ENCODE measurements at regions of chr13 and their contacts with region 1.

Region 1: DNA sequence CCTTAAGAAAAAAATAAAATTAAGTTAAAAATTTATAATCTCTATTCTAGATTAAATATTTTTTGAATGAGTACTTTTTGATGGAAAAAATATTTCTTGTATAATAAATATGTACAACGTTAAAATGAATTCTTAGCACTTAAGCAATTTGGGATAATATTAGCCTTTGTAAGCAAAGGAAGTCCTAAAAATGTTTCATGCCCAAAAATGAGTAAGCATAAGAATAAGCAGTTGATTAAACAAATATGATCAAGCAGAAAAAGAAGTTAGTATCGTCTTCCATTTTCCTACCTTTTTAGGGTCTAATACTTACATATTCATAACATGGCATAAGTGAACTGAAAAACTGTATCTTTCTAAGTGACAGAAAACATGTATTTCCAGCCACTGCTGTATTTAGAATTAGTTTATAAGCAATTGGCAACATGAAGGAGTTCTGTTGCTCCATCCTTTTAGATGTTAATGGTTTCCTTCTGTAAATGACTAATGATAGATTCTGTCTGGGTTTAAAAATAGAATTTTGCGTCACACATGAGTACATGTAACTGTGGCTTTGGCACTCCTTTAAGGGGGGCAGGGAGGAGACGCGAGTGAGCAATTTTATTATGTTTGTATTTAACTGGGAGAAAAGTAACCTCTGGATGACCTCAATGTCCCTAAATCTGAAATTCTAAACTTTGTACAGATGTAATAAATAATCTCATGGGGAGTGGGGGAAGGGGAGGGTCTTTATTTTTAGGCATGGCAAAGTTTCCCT is 237.4 kb downstream of the RGCC start:
- ATAC-seq: peak; percentile 72 to 86 (median 80)
- H3K4me3 ChIP-seq: no peak overlapping the region
- H3K27ac ChIP-seq: peak overlapping the region; percentile 40 to 55
- H3K4me1 ChIP-seq: peaks cover 25 to 48% of the 10 kb centered on the region in 2 donors

Region 2: DNA sequence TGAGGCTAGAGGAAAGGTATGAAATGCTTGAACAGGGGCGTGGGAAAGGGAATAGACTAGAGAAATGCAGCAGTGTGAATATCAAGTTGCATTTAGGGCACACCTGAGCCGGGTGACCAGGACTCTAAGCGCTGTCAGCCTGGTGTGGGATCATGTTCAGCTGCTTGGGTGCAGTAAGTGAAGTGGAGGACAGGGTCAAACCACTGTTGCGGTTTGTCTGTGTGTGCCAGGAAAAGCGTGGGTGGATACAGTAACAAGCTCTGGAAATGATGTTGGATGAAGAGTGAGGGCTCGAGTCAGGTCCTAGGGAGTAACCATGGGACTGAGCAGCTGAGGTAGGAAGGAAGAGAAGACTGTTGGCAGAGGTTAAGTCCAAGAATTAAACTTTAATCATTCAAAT is 369.5 kb after region 1 on chr13:
- in situ Hi-C with region 1: loop called in 1 of 9 experiments (anchors 25 kb)
- ATAC-seq: peak in 2 of 8 experiments; percentile 55 to 56
- H3K4me3 ChIP-seq: no peak overlapping the region
- H3K27ac ChIP-seq: no peak overlapping the region
- H3K4me1 ChIP-seq: no peaks in the 10 kb centered on the region